ENCODE measurements at regions of chr2 and their contacts with region 1.

Region 1: GRCh38 chr2:85669549-85669948 is 1.6 kb upstream of the SFTPB start:
- DNase-seq: no peak
- H3K4me3 ChIP-seq: no peak overlapping the region
- H3K27ac ChIP-seq: no peak overlapping the region
- H3K4me1 ChIP-seq: no peaks in the 10 kb centered on the region
- H3K27me3 ChIP-seq: no peaks in the 10 kb centered on the region
- CTCF ChIP-seq: no peak

Region 2: GRCh38 chr2:85684806-85685205 is 15.3 kb after region 1 on chr2:
- intact Hi-C with region 1: loop called (anchors 2 kb)
- DNase-seq: peak in 1 of 2 donors; percentile 20
- H3K4me3 ChIP-seq: no peak overlapping the region
- H3K27ac ChIP-seq: no peak overlapping the region
- H3K4me1 ChIP-seq: no peaks in the 10 kb centered on the region
- H3K27me3 ChIP-seq: no peaks in the 10 kb centered on the region
- CTCF ChIP-seq: no peak